ENCODE measurements at regions of chr6 and their contacts with region 1.

Region 1: DNA sequence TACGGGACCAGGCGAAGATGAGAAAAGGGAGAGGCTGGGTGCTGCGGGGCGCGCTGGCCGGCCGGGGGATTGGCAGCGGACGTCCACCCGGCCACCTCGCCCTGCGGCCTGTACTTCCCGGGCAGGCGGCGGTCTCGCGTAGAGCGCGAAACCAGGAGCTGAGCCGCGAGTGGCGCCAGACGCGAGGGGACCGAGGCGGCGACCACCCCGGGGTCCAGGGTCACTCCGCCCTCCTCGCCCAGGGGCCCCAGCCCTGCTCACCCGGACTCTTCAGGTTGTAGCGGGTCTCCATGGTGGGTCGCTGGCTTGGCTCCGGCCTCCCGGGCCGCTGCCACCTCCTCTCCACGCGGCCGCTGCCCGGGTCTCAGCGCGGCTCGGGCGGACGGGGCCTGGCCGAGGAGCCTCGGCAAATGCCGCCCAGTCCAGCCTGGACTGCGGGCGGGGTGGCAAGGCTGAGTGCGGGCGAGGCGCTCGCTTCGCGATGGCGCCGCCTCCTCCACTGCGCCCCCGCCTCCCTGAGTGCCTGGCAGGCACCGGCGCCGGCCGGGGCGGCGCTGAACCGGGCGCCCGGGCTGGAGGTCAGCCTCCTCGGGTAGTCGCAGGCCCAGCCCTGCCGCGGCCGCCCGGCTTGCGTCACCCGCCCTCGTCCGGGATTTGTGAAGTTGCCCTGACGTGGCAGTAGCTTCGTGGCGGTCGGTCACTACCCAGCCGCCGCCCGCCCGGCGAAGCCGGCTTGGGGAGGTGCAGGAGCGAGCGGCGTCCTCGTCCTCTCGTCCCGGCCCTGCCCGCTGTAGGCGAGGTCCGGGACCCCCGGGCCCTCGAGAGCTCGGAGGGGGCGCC is at the start of gene UBE2J1:
- DNase-seq: peak; percentile 73 to 98 (median 86)

Region 2: DNA sequence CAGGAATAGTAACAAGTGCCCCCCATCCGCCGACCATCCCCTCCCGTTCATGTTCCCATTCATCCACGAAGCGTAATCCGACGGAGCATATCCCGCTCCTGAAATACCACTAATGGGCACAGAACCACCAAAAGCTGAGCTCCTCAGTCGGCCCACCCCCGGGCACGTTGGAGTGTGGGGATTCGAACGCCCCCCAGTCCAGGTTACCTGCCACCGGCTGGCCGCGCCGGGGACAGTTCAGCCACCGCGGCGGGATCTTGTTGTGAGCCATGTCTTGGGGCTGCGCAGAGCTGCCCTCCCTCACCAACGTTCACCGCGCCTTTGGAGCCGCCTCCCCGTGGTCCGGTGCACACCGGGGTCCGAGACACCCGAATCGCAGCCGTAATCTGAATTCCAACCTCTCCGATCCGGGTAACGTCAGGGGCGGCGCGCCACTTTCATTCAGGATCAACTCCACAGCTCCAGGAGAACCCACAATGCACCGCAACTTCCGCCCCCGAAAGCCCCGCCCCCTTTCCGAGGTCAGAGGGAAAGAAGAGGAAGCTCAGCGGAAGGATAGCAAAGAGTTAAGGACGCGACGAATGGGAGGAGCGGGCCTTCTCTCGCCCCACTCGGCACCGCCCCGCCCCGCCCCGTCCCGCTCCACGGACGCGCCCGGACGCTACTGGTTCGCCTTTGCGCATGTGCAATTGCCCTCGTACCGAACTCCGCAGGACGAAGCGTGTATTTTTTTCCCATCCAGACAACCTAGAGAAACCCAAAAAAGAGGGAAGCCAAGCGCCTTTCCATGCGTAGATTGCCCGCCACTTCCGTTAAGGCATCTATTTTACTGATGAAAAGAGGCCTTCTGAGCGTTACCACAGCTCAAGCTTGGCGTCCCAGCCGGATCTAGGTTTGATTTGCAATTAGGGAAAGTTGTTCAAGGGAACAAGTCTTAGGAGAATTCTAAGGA is 389.1 kb before region 1 on chr6 and contains the start of gene RNGTT:
- intact Hi-C with region 1: loop called (anchors 5 kb)
- DNase-seq: peak; percentile 97 to 100 (median 98)

Region 3: GRCh38 chr6:89412071-89413005 is 59.8 kb after region 1 on chr6 and contains the start of gene RRAGD:
- intact Hi-C with region 1: loop called (anchors 5 kb)
- DNase-seq: peak; percentile 72 to 98 (median 83)

Region 4: GRCh38 chr6:89471287-89471867 is 118.9 kb after region 1 on chr6:
- intact Hi-C with region 1: no loop called
- DNase-seq: no peak

Region 5: DNA sequence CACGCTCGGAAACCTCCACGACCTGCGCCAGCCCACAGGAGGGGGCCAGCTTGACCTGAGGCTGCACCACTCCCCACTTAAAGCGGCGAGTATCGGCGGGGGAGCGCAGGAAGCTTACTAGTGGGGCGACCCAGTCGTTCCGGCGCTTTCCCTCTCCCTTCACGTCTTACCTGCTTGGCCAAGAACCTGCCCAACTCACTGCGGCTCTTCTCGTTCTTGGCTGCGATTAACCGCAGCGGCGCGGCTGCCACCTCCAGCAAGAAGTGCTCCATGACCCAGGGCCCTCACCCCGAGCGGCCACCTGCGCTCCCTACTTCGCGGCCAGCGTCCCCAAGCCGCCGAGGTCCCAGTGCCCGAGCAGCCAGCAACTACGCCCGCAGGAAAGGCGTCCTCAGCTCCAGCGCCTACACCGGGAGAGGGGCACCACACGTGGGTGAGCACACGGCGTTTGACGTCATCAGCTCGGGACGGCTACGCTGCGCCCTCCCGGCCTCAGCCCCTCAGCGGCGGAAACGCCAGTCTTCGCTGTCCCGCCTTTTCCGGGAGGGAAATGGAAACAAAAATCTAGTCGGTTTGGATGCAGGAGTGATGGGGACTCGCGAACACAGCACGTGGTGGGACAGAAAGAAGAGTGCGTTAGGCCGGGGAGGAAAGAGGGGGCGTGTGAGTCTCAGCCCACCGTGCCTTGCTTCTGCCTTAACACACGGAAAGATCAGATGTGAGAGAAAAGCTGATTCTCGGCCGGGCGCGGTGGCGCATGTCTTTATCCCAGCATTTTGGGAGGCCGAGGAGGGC is 467.0 kb after region 1 on chr6 and contains the start of gene MDN1:
- intact Hi-C with region 1: loop called (anchors 10 kb)
- DNase-seq: peak; percentile 85 to 99 (median 91)